PC-9 (cell line): ENCODE measurements at regions of chr11 and their contacts with region 1.

Region 1: GRCh38 chr11:23112987-23113886 is 253.0 kb upstream of the CCDC179 start:
- DNase-seq: peak; percentile 38 to 52
- H3K4me3 ChIP-seq: no peak overlapping the region
- H3K27ac ChIP-seq: no peak overlapping the region
- H3K4me1 ChIP-seq: no peaks in the 10 kb centered on the region
- H3K27me3 ChIP-seq: no peaks in the 10 kb centered on the region
- CTCF ChIP-seq: peak; percentile 71

Region 2: GRCh38 chr11:22875869-22876473 is 237.3 kb before region 1 on chr11:
- CTCF ChIA-PET with region 1: no interaction called
- POLR2A ChIA-PET with region 1: no interaction called
- intact Hi-C with region 1: loop called (anchors 5 kb)
- DNase-seq: peak; percentile 58 to 71
- H3K4me3 ChIP-seq: no peak overlapping the region
- H3K27ac ChIP-seq: no peak overlapping the region
- H3K4me1 ChIP-seq: no peaks in the 10 kb centered on the region
- H3K27me3 ChIP-seq: no peaks in the 10 kb centered on the region
- CTCF ChIP-seq: peak; percentile 87

Region 3: DNA sequence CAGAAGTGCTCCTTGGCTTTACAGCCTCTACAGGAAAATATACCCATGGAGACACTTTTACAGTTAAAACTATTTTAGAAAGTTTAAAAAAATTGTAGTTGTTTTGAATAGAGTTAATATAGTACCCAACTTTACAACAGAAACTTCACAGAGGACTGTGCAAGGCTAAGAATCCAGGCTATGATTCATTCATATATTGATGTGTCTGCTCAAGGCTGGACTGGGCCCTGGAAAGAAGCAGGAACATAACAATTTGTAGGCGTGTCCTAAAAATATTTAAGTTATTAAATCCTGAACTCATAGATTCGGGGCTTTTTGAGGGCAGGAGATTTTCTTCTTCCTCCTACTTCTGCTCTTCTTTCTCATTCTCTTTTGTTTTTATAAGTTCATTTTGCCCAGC is 38.6 kb after region 1 on chr11:
- CTCF ChIA-PET with region 1: no interaction called
- POLR2A ChIA-PET with region 1: no interaction called
- intact Hi-C with region 1: no loop called
- DNase-seq: no peak
- H3K4me3 ChIP-seq: no peak overlapping the region
- H3K27ac ChIP-seq: no peak overlapping the region
- H3K4me1 ChIP-seq: no peaks in the 10 kb centered on the region
- H3K27me3 ChIP-seq: no peaks in the 10 kb centered on the region
- CTCF ChIP-seq: no peak

Region 4: DNA sequence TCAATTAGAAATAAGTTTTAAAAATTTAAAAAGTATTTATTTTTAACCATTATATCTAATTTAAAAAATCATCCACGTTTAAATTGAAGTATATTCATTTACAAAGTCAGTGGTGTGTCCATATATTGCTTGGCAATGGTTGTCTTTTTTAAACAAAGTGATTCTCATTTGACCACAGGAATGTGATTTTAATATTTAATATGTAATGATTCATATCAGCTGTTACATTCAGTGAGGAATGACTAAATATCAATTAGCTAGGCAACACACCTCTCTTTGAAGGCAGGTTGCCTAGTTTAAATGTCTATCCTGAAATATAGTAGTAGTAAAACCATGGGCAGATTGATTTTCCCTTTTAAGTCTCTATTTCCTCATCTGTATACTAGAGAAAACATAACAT is 139.2 kb after region 1 on chr11:
- CTCF ChIA-PET with region 1: no interaction called
- POLR2A ChIA-PET with region 1: no interaction called
- intact Hi-C with region 1: no loop called
- DNase-seq: no peak
- H3K4me3 ChIP-seq: no peak overlapping the region
- H3K27ac ChIP-seq: no peak overlapping the region
- H3K4me1 ChIP-seq: no peaks in the 10 kb centered on the region
- H3K27me3 ChIP-seq: no peaks in the 10 kb centered on the region
- CTCF ChIP-seq: no peak